ENCODE measurements at regions of chr2 and their contacts with region 1.

Region 1: GRCh38 chr2:104976603-104977120 is 61.2 kb upstream of the MRPS9 start:
- DNase-seq: peak; percentile 89
- ATAC-seq: peak; percentile 97
- H3K4me3 ChIP-seq: peak overlapping the region; percentile 5 to 55 (median 47)
- H3K4me3 Mint-ChIP-seq: peak overlapping the region; percentile 90
- H3K27ac ChIP-seq: peak overlapping the region; percentile 20 to 46
- H3K27ac Mint-ChIP-seq: peak overlapping the region; percentile 94
- H3K4me1 ChIP-seq: peaks cover 28 to 33% of the 10 kb centered on the region in 2 donors
- H3K4me1 Mint-ChIP-seq: peaks cover 38% of the 10 kb centered on the region
- H3K27me3 ChIP-seq: no peaks in the 10 kb centered on the region
- H3K27me3 Mint-ChIP-seq: no peaks in the 10 kb centered on the region
- CTCF ChIP-seq: peak; percentile 79

Region 2: GRCh38 chr2:104872866-104873688 is 103.6 kb before region 1 on chr2:
- CTCF ChIA-PET with region 1: interaction called, 3 read pairs
- POLR2A ChIA-PET with region 1: no interaction called
- intact Hi-C with region 1: loop called (anchors 5 kb)
- DNase-seq: peak; percentile 80
- ATAC-seq: peak; percentile 80
- H3K4me3 ChIP-seq: peak overlapping the region; percentile 38 to 78 (median 58)
- H3K4me3 Mint-ChIP-seq: peak overlapping the region; percentile 89
- H3K27ac ChIP-seq: no peak overlapping the region
- H3K27ac Mint-ChIP-seq: peak overlapping the region; percentile 46
- H3K4me1 ChIP-seq: peaks cover 14 to 15% of the 10 kb centered on the region in 2 donors
- H3K4me1 Mint-ChIP-seq: peaks cover 23% of the 10 kb centered on the region
- H3K27me3 ChIP-seq: peaks cover 0 to 54% (median 28%) of the 10 kb centered on the region in 4 experiments
- H3K27me3 Mint-ChIP-seq: peaks cover 31% of the 10 kb centered on the region
- CTCF ChIP-seq: peak; percentile 65

Region 3: GRCh38 chr2:104938231-104938941 is 38.3 kb before region 1 on chr2:
- CTCF ChIA-PET with region 1: interaction called, 11 read pairs
- POLR2A ChIA-PET with region 1: interaction called, 4 read pairs
- intact Hi-C with region 1: loop called (anchors 1 kb)
- DNase-seq: peak; percentile 52
- ATAC-seq: peak; percentile 86
- H3K4me3 ChIP-seq: peak overlapping the region in 4 of 5 experiments; percentile 10 to 64 (median 33)
- H3K4me3 Mint-ChIP-seq: peak overlapping the region; percentile 80
- H3K27ac ChIP-seq: peak overlapping the region in 1 of 2 donors; percentile 48
- H3K27ac Mint-ChIP-seq: peak overlapping the region; percentile 62
- H3K4me1 ChIP-seq: peaks cover 23 to 26% of the 10 kb centered on the region in 2 donors
- H3K4me1 Mint-ChIP-seq: peaks cover 29% of the 10 kb centered on the region
- H3K27me3 ChIP-seq: no peaks in the 10 kb centered on the region
- H3K27me3 Mint-ChIP-seq: no peaks in the 10 kb centered on the region
- CTCF ChIP-seq: no peak

Region 4: DNA sequence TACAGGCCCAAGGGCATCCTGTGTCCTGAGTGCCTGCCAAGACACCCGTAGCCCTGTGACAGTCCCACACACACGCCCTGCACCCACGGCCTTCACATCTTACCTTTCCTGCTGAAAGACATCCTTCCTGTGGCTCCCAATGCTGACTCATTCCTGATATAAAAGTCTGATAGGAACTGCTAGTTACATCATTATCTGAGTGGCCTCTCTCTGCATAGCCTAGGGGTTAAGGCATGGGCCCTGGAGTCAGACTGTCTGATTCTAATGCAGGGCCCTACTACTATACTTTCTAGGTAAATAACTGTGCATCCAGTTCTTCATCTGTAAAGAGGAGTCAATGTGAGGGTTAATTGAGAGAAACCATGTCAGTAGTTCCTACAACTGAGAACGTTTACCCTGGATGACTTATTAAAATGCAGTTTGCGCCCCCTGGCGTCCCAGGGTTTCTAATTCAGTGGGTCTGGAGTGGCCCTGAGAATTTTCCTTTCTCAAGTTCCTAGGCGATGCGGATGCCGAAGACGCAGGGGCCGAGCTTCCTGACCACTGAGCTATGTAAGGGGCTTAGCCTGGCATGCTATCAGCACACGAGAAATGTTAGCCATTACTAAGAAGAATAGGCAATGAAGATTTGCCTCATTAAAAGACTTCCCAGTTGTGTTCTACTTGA is 258.9 kb after region 1 on chr2:
- CTCF ChIA-PET with region 1: interaction called, 11 read pairs
- POLR2A ChIA-PET with region 1: no interaction called
- intact Hi-C with region 1: no loop called
- DNase-seq: peak; percentile 81
- ATAC-seq: peak; percentile 68
- H3K4me3 ChIP-seq: no peak overlapping the region
- H3K4me3 Mint-ChIP-seq: no peak overlapping the region
- H3K27ac ChIP-seq: no peak overlapping the region
- H3K27ac Mint-ChIP-seq: no peak overlapping the region
- H3K4me1 ChIP-seq: peaks cover 10 to 12% of the 10 kb centered on the region in 2 donors
- H3K4me1 Mint-ChIP-seq: peaks cover 24% of the 10 kb centered on the region
- H3K27me3 ChIP-seq: no peaks in the 10 kb centered on the region
- H3K27me3 Mint-ChIP-seq: no peaks in the 10 kb centered on the region
- CTCF ChIP-seq: peak; percentile 93

Measured in B cell (primary cell).